BJ (cell line): ENCODE measurements at regions of chr5 and their contacts with region 1.

Region 1: GRCh38 chr5:73387601-73388305 is 60.8 kb downstream of the FOXD1 start:
- DNase-seq: no peak
- H3K4me3 ChIP-seq: no peak overlapping the region
- H3K27me3 ChIP-seq: no peaks in the 10 kb centered on the region
- CTCF ChIP-seq: no peak

Region 2: DNA sequence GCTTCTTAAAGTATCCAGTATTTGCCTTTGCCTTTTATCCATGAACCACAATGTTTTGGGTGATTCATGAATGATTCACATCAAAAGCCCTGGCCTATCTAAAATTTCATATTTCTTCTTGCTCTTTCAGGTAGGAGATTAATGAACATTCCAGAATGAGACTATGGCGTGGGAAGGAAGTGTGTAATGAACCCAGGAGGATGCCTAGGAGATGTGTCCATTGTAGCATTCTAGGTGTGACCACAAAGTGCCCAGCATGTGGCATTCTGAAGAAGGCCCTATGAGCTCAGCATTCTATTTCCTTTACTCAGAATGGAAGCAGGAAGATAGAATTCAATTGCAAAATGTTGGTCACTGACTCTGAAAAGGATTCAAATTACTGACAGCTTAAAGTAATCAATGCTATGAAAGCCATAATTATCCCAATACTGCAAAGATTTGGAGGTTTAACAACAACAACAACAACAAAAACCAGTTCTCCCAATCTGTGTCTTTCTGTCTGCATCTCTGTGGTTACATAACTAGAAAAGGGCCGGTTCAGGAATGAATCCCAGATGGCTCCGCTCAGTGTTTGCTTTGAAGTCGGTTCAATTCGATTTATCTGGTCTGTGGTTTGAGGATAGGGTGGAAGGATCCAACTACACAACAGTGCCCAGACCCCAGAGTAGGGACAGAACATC is 65.9 kb before region 1 on chr5:
- CTCF ChIA-PET with region 1: no interaction called
- POLR2A ChIA-PET with region 1: no interaction called
- DNase-seq: peak; percentile 74
- H3K4me3 ChIP-seq: no peak overlapping the region
- H3K27me3 ChIP-seq: no peaks in the 10 kb centered on the region
- CTCF ChIP-seq: no peak

Region 3: DNA sequence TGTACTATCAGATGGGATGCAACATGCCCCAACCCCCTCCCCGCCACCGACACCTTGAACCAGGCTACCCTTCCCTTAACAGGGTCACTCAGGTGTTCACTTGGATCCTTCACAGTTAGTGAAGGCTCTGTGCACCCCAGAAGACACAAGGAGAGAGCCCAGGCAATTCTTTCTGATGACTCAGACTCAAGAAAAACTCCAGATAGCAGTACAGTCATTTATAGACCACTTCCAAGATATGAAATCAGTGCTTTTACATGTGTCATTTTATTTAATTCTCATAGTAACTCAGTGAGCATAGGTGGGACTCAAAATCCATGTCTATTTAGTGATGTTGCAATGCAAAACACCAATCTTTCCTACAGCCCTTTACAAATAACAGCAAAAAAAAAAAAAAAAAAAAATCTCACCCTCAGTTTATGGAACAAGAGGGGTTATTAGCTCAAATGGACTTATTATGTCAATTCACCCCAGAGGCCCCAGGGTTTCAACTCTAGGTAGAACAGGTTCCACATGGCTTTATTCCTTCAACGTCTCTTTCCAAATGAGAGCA is 11.1 kb before region 1 on chr5:
- CTCF ChIA-PET with region 1: interaction called, 10 read pairs
- POLR2A ChIA-PET with region 1: interaction called, 3 read pairs
- DNase-seq: no peak
- H3K4me3 ChIP-seq: no peak overlapping the region
- H3K27me3 ChIP-seq: no peaks in the 10 kb centered on the region
- CTCF ChIP-seq: no peak

Region 4: GRCh38 chr5:73424556-73424977 is 36.8 kb after region 1 on chr5:
- CTCF ChIA-PET with region 1: no interaction called
- POLR2A ChIA-PET with region 1: no interaction called
- DNase-seq: no peak
- H3K4me3 ChIP-seq: no peak overlapping the region
- H3K27me3 ChIP-seq: no peaks in the 10 kb centered on the region
- CTCF ChIP-seq: no peak